Caco-2 (cell line): ENCODE measurements at regions of chr17 and their contacts with region 1.

Region 1: GRCh38 chr17:36148559-36149295 is 27.7 kb downstream of the TBC1D3B start:
- DNase-seq: peak; percentile 58 to 79
- H3K4me3 ChIP-seq: no peak overlapping the region
- H3K4me3 Mint-ChIP-seq: no peak overlapping the region
- H3K27ac Mint-ChIP-seq: no peak overlapping the region
- H3K4me1 ChIP-seq: no peaks in the 10 kb centered on the region
- H3K4me1 Mint-ChIP-seq: no peaks in the 10 kb centered on the region
- H3K27me3 ChIP-seq: no peaks in the 10 kb centered on the region
- H3K27me3 Mint-ChIP-seq: peaks cover 7% of the 10 kb centered on the region
- CTCF ChIP-seq: peak; percentile 98

Region 2: GRCh38 chr17:35794988-35795824 is 353.5 kb before region 1 on chr17 and contains the start of gene MMP28:
- CTCF ChIA-PET with region 1: no interaction called
- POLR2A ChIA-PET with region 1: no interaction called
- intact Hi-C with region 1: no loop called
- DNase-seq: peak in 1 of 2 experiments; percentile 54
- H3K4me3 ChIP-seq: peak within 1 kb of the TSS; percentile 44
- H3K4me3 Mint-ChIP-seq: peak within 1 kb of the TSS; percentile 76
- H3K27ac Mint-ChIP-seq: no peak within 1 kb of the TSS
- H3K4me1 ChIP-seq: no peaks in the 10 kb centered on the region
- H3K4me1 Mint-ChIP-seq: no peaks in the 10 kb centered on the region
- H3K27me3 ChIP-seq: peaks cover 8% of the 10 kb centered on the region
- H3K27me3 Mint-ChIP-seq: peaks cover 38% of the 10 kb centered on the region
- CTCF ChIP-seq: no peak
- total RNA-seq, gene MMP28: not detected in 2 replicates

Region 3: GRCh38 chr17:35947156-35947585 is 201.6 kb before region 1 on chr17:
- CTCF ChIA-PET with region 1: no interaction called
- POLR2A ChIA-PET with region 1: no interaction called
- intact Hi-C with region 1: loop called (anchors 5 kb)
- DNase-seq: peak; percentile 73 to 76
- H3K4me3 ChIP-seq: peak overlapping the region; percentile 25
- H3K4me3 Mint-ChIP-seq: peak overlapping the region; percentile 60
- H3K27ac Mint-ChIP-seq: no peak overlapping the region
- H3K4me1 ChIP-seq: peaks cover 13% of the 10 kb centered on the region
- H3K4me1 Mint-ChIP-seq: no peaks in the 10 kb centered on the region
- H3K27me3 ChIP-seq: no peaks in the 10 kb centered on the region
- H3K27me3 Mint-ChIP-seq: no peaks in the 10 kb centered on the region
- CTCF ChIP-seq: peak; percentile 90 to 93

Region 4: GRCh38 chr17:35981908-35982330 is 166.8 kb before region 1 on chr17:
- CTCF ChIA-PET with region 1: interaction called, 12 read pairs
- POLR2A ChIA-PET with region 1: no interaction called
- intact Hi-C with region 1: no loop called
- DNase-seq: peak; percentile 58 to 62
- H3K4me3 ChIP-seq: no peak overlapping the region
- H3K4me3 Mint-ChIP-seq: no peak overlapping the region
- H3K27ac Mint-ChIP-seq: no peak overlapping the region
- H3K4me1 ChIP-seq: peaks cover 24% of the 10 kb centered on the region
- H3K4me1 Mint-ChIP-seq: peaks cover 9% of the 10 kb centered on the region
- H3K27me3 ChIP-seq: no peaks in the 10 kb centered on the region
- H3K27me3 Mint-ChIP-seq: no peaks in the 10 kb centered on the region
- CTCF ChIP-seq: peak in 1 of 2 experiments; percentile 48

Region 5: DNA sequence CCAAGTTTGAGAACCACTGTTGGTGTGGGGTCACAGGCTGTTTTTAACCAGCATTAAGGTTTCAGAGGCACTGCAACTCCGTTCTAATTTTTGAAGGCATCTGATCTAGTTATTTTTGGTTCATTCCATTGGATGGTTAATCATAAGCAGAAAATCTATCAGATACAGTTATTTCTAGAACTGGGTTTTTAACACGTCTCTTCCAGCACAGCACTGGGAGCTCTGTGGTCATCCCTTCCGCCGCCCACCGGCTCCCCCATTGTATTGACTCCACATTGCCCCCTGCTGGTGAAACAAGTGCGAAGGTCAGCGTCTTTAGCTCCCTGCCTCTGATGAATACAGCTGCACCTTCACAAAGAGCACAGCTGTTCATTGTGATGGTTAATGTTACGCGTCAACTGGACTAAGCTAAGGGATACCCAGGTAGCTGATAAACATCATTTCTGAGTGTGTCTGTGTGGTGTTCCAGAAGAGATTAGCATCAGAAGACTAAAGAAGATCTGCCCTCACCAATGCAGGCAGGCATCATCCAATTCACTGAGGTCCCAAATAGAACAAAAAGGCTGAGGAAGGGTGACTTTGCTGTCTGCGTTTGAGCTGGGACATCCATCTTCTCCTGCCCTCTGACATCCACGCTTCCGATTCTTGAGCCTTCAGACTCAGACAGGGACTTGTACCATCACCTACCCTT is 76.2 kb before region 1 on chr17:
- CTCF ChIA-PET with region 1: interaction called, 12 read pairs
- POLR2A ChIA-PET with region 1: no interaction called
- intact Hi-C with region 1: loop called (anchors 1 kb)
- DNase-seq: peak; percentile 54 to 77
- H3K4me3 ChIP-seq: no peak overlapping the region
- H3K4me3 Mint-ChIP-seq: no peak overlapping the region
- H3K27ac Mint-ChIP-seq: no peak overlapping the region
- H3K4me1 ChIP-seq: no peaks in the 10 kb centered on the region
- H3K4me1 Mint-ChIP-seq: no peaks in the 10 kb centered on the region
- H3K27me3 ChIP-seq: no peaks in the 10 kb centered on the region
- H3K27me3 Mint-ChIP-seq: no peaks in the 10 kb centered on the region
- CTCF ChIP-seq: peak; percentile 81 to 89

Region 6: DNA sequence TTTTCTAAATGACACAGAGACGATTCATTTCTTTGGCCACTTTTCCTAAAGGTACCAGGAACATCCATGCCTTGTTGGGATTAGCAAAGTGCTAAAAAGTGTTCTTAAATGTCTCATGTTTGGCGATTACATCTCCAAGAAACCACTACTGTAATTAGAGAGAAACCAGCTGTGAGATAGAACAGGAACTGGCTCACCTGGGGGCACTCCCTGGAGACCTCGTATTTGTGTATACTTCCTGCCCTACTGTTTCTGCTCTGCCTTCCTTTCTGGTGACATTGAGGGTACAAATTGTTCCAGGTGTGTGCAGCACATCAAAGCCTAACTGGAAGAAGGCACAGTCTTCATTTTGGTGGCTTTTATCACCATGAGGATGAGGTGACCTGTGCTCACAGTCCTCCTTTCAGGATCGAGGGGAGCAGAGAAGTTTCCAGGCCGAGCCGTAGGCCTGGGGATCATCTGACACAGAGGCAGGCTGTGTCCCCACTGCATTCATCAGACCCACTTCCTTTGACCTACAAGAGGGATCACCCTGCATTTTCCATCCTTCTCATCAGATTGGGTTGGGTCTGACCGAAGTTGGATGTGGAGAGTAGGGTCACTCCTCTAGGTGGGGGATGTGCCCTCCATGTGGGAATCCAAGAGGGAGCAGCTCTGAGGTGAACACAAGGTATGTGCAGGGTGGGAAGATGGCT is 21.4 kb before region 1 on chr17:
- CTCF ChIA-PET with region 1: no interaction called
- POLR2A ChIA-PET with region 1: no interaction called
- intact Hi-C with region 1: no loop called
- DNase-seq: no peak
- H3K4me3 ChIP-seq: no peak overlapping the region
- H3K4me3 Mint-ChIP-seq: no peak overlapping the region
- H3K27ac Mint-ChIP-seq: no peak overlapping the region
- H3K4me1 ChIP-seq: no peaks in the 10 kb centered on the region
- H3K4me1 Mint-ChIP-seq: no peaks in the 10 kb centered on the region
- H3K27me3 ChIP-seq: no peaks in the 10 kb centered on the region
- H3K27me3 Mint-ChIP-seq: peaks cover 8% of the 10 kb centered on the region
- CTCF ChIP-seq: no peak